ENCODE measurements at regions of chr12 and their contacts with region 1.

Region 1: GRCh38 chr12:113196996-113197395 is 11.5 kb downstream of the RITA1 start:
- DNase-seq: peak; percentile 81
- ATAC-seq: peak; percentile 98
- H3K4me3 Mint-ChIP-seq: no peak overlapping the region
- H3K27ac Mint-ChIP-seq: no peak overlapping the region
- H3K4me1 Mint-ChIP-seq: peaks cover 7% of the 10 kb centered on the region
- H3K27me3 Mint-ChIP-seq: no peaks in the 10 kb centered on the region

Region 2: GRCh38 chr12:112868459-112869041 is 328.4 kb before region 1 on chr12:
- CTCF ChIA-PET with region 1: no interaction called
- DNase-seq: no peak
- ATAC-seq: no peak
- H3K4me3 Mint-ChIP-seq: no peak overlapping the region
- H3K27ac Mint-ChIP-seq: no peak overlapping the region
- H3K4me1 Mint-ChIP-seq: peaks cover 3% of the 10 kb centered on the region
- H3K27me3 Mint-ChIP-seq: peaks cover 53% of the 10 kb centered on the region

Region 3: DNA sequence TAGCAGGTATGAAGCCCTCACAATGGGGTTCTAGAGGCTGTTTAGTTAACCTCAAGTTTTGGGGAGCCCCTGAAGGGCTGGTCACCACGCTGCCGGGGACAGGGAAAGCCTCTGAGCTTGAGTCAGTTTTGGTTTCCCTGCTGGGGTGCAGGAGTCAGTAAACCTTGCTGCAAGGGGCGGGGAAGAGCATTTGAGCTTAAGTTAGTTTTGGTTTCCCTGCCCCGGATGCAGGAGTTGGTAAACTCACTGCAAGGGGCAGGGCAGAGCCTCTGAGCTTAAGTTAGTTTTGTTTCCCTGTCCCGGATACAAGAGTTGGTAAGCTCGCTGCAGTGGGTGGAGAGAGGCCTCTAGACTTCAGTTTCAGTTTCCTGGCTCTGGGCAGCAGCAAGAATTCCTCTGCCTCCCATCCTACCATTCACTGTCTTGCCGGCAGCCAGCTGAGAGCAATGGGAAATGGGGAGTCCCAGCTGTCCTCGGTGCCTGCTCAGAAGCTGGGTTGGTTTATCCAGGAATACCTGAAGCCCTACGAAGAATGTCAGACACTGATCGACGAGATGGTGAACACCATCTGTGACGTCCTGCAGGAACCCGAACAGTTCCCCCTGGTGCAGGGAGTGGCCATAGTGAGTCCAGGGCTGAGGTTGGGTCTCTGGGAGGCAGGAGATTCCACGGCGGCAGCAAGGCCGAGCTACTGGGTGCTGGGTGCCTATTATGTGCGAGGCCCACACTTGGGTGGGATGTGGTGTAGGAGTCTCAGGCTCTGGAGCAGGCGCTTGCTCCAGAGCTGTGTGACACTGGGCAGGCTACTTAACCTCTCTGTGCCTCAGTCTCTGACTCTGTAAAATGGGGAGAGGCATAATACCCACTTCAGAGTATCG is 218.6 kb before region 1 on chr12 and contains the start of gene OAS2:
- CTCF ChIA-PET with region 1: no interaction called
- DNase-seq: peak; percentile 96
- ATAC-seq: peak; percentile 92
- H3K4me3 Mint-ChIP-seq: peak within 1 kb of the TSS; percentile 89
- H3K27ac Mint-ChIP-seq: peak within 1 kb of the TSS; percentile 100
- H3K4me1 Mint-ChIP-seq: peaks cover 52% of the 10 kb centered on the region
- H3K27me3 Mint-ChIP-seq: no peaks in the 10 kb centered on the region
- total RNA-seq, gene OAS2: 276 to 383 TPM

Region 4: DNA sequence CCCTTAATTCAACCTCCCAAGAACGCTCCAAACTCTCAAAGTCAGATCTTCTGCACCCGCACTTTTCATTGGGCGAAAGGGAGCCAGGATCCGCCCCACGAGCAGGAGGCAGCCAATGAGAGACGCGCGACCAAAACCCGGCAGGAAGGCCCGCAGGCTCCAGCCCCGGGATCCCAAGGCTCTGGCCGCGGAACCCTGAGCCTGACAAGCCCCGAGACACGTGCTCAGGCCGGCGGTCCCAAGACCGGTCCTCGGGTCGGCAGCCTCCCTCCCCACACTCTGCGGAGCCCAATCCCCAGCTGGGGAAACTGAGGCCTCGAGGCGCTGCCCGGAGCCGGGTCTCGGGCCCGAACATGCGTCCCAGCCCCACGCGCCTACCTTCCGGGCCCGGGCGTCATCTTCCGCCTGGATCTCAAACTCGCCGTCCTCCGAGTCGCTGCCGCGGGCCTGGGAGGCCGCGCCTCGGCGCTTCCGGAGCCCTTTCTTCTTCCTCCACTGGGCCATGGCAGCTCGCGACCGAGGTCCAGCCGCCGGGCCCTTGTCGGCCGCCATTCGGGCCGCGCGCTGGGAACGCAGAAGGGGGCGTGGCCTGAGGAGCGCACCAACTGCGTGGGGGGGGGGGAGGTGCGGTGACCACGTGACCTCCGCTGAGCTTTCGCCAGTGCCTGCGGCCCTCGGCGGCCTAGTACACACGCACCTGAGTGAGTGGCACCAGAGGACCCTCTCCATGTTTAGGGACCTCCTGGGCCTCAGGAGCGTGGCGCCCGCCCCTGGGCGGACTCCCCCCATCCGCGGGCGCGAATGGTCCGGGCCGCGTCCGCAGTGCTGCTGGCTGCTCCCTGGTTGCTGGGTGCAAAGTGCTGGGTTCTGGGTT is 11.9 kb before region 1 on chr12 and contains the starts of genes DDX54 and RITA1:
- CTCF ChIA-PET with region 1: interaction called, 15 read pairs
- DNase-seq: peak; percentile 93
- ATAC-seq: peak; percentile 91
- H3K4me3 Mint-ChIP-seq: peak within 1 kb of the TSS; percentile 98
- H3K27ac Mint-ChIP-seq: peak within 1 kb of the TSS; percentile 97
- H3K4me1 Mint-ChIP-seq: peaks cover 44% of the 10 kb centered on the region
- H3K27me3 Mint-ChIP-seq: no peaks in the 10 kb centered on the region
- total RNA-seq, gene DDX54: 71.5 to 99.0 TPM
- total RNA-seq, gene RITA1: 23.1 to 29.6 TPM

Region 5: DNA sequence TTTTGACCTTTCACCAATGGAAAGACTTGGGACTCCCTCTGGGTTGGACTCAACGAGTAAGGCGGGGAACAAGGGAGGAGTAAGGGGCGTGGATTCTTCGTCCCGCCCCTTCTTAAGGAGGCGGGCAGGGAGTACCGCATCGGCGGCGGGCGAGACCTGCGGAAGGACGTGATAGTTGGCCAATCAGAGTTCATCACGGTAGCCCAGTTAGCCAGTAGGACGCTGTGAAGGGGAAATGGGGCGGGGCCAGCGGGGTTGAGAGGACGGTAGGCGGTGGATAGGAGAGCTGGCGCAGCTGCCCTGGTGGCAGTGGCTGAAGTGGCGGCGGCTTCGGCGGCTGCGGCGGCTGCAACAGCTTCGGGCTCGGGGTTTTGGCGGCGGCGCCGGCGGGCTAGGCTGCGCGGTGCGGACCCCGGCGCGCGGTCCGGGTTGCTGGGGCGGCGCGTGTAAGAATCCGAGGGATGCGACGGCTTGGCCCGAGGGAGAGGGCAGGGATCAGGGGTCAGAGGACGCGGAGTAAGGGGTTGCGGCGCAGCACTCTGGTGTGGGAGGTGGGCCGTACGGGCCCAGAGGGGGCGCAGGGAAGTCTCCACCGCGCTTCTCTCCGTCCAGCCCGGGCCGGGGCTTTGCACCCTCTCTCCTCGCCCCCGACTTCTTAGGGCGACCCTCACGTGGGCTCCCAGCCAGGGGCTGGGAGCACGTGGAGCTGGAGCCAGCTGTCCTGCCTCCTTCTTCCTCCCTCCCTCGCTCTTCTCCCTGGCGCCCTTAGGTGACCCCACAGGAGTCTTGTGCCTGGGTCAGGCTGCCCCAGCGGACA is 24.4 kb after region 1 on chr12 and contains the start of gene TPCN1:
- CTCF ChIA-PET with region 1: interaction called, 20 read pairs
- DNase-seq: peak; percentile 99
- ATAC-seq: peak; percentile 95
- H3K4me3 Mint-ChIP-seq: peak within 1 kb of the TSS; percentile 80
- H3K27ac Mint-ChIP-seq: peak within 1 kb of the TSS; percentile 88
- H3K4me1 Mint-ChIP-seq: peaks cover 36% of the 10 kb centered on the region
- H3K27me3 Mint-ChIP-seq: peaks cover 3% of the 10 kb centered on the region
- total RNA-seq, gene TPCN1: 21.4 to 23.3 TPM

Region 6: GRCh38 chr12:113424915-113425823 is 228.2 kb after region 1 on chr12:
- CTCF ChIA-PET with region 1: interaction called, 13 read pairs
- DNase-seq: peak; percentile 62
- ATAC-seq: peak; percentile 67
- H3K4me3 Mint-ChIP-seq: no peak overlapping the region
- H3K27ac Mint-ChIP-seq: no peak overlapping the region
- H3K4me1 Mint-ChIP-seq: peaks cover 13% of the 10 kb centered on the region
- H3K27me3 Mint-ChIP-seq: peaks cover 17% of the 10 kb centered on the region